ENCODE measurements at regions of chr10 and their contacts with region 1.

Region 1: GRCh38 chr10:72331601-72332422 is 22.9 kb downstream of the DNAJB12 start:
- DNase-seq: peak; percentile 82 to 99 (median 96)
- ATAC-seq: peak; percentile 74 to 77
- H3K4me3 Mint-ChIP-seq: peak overlapping the region; percentile 72 to 90 (median 84)
- H3K27ac Mint-ChIP-seq: peak overlapping the region; percentile 92 to 99 (median 98)
- H3K4me1 Mint-ChIP-seq: peaks cover 39 to 97% (median 93%) of the 10 kb centered on the region in 4 donors
- H3K27me3 Mint-ChIP-seq: no peaks in the 10 kb centered on the region

Region 2: DNA sequence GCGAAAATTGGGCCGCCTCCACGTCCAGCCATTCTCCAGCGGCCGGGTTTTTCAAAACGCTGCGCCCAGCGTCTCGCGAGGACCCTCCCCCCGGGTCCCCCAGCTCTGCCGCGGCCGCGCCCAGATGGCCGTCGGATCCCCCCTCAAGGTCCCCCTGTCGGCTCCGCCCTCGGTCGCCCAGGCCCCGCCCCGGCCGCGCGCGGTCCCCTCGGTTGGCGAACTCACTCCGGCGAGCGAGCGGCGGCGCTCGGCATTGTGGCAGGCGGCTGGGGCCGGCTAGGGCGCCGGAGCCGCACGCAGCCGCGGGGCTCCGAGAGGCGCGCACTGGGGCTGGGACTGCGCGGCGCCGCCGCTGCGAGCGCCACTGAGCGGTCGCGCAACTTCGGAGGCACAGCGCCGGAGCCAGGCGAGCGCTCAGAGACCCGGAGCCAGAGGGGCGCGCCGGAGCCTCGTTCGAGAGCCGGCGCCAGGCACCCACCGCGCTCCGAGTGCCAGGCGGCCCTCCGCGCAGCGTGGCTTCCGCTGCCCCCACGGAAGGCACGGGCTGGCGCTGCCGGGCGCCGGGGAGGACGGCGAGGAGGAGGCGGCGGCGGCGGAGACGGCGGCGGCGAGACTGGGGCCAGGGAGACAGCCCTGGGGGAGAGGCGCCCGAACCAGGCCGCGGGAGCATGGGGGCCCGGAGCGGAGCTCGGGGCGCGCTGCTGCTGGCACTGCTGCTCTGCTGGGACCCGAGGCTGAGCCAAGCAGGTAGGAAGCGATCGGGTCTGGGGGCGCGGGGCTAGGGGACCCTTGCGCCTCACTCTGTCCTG is 1119.3 kb before region 1 on chr10 and contains the start of gene UNC5B:
- POLR2A ChIA-PET with region 1: no interaction called
- DNase-seq: peak; percentile 25 to 77 (median 41)
- ATAC-seq: peak; percentile 74 to 87
- H3K4me3 Mint-ChIP-seq: peak within 1 kb of the TSS; percentile 65 to 84 (median 76)
- H3K27ac Mint-ChIP-seq: peak within 1 kb of the TSS in 2 of 10 donors; percentile 18 to 35
- H3K4me1 Mint-ChIP-seq: peaks cover 3 to 25% (median 22%) of the 10 kb centered on the region in 4 donors
- H3K27me3 Mint-ChIP-seq: peaks cover 34 to 67% (median 57%) of the 10 kb centered on the region in 5 donors
- polyA plus RNA-seq, gene UNC5B: 0.03 TPM in 1 of 3 donors, not detected in the others

Region 3: GRCh38 chr10:72223743-72224101 is 108.1 kb before region 1 on chr10:
- POLR2A ChIA-PET with region 1: interaction called, 10 read pairs
- DNase-seq: no peak
- ATAC-seq: no peak
- H3K4me3 Mint-ChIP-seq: peak overlapping the region in 8 of 10 donors; percentile 24 to 69 (median 55)
- H3K27ac Mint-ChIP-seq: peak overlapping the region; percentile 48 to 91 (median 81)
- H3K4me1 Mint-ChIP-seq: peaks cover 20 to 66% (median 60%) of the 10 kb centered on the region in 4 donors
- H3K27me3 Mint-ChIP-seq: no peaks in the 10 kb centered on the region

Region 4: DNA sequence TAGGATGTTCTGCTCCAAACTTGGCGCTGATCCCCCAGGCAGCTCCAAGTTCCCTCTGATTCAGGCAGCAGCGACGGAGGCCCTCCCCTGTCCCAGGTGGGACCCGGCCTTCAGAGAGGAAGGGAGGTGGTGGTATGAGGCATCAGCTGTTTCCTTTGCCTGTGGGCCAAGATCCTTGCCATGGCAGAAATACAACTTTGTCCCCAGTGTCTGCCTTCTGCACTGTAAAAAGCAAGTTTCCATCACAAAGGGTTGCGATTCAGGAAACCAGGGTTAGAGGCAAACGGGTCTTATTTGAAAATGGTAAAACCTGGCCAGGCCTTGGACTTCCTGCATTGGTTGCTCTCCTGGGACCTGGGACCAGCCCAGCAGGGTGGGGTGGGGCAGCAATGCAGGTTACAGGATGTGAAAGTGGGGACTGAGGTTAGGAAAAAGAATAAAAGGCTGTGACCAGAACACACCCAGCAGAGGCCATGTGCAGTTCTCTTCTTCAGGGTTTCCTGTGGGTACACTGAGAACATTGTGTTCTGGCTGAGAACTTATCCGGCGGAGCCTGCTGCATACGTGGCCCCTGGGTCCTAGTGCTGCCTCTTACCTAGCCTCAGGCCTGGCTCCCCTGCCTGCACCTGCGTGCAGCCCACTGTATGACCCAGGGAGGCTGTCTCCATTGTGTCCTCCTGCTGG is 83.2 kb before region 1 on chr10:
- POLR2A ChIA-PET with region 1: interaction called, 16 read pairs
- DNase-seq: peak; percentile 46 to 92 (median 81)
- ATAC-seq: peak; percentile 82 to 86
- H3K4me3 Mint-ChIP-seq: peak overlapping the region; percentile 70 to 91 (median 86)
- H3K27ac Mint-ChIP-seq: peak overlapping the region; percentile 93 to 99 (median 98)
- H3K4me1 Mint-ChIP-seq: peaks cover 49 to 95% (median 90%) of the 10 kb centered on the region in 4 donors
- H3K27me3 Mint-ChIP-seq: no peaks in the 10 kb centered on the region

Region 5: GRCh38 chr10:72254813-72255568 is 76.8 kb before region 1 on chr10:
- POLR2A ChIA-PET with region 1: interaction called, 17 read pairs
- DNase-seq: peak in 6 of 10 donors; percentile 28 to 67 (median 41)
- ATAC-seq: peak; percentile 71 to 85
- H3K4me3 Mint-ChIP-seq: peak overlapping the region; percentile 66 to 92 (median 78)
- H3K27ac Mint-ChIP-seq: peak overlapping the region; percentile 93 to 98 (median 96)
- H3K4me1 Mint-ChIP-seq: peaks cover 47 to 89% (median 84%) of the 10 kb centered on the region in 4 donors
- H3K27me3 Mint-ChIP-seq: no peaks in the 10 kb centered on the region

Region 6: GRCh38 chr10:72260588-72261322 is 71.1 kb before region 1 on chr10:
- POLR2A ChIA-PET with region 1: interaction called, 17 read pairs
- DNase-seq: peak; percentile 62 to 86 (median 72)
- ATAC-seq: peak; percentile 72 to 75
- H3K4me3 Mint-ChIP-seq: peak overlapping the region; percentile 82 to 94 (median 89)
- H3K27ac Mint-ChIP-seq: peak overlapping the region; percentile 87 to 99 (median 94)
- H3K4me1 Mint-ChIP-seq: peaks cover 37 to 76% (median 75%) of the 10 kb centered on the region in 4 donors
- H3K27me3 Mint-ChIP-seq: no peaks in the 10 kb centered on the region

Region 7: GRCh38 chr10:72297968-72298773 is 33.6 kb before region 1 on chr10:
- POLR2A ChIA-PET with region 1: interaction called, 16 read pairs
- DNase-seq: peak; percentile 51 to 90 (median 78)
- ATAC-seq: peak; percentile 51
- H3K4me3 Mint-ChIP-seq: peak overlapping the region; percentile 39 to 89 (median 82)
- H3K27ac Mint-ChIP-seq: peak overlapping the region; percentile 43 to 100 (median 97)
- H3K4me1 Mint-ChIP-seq: peaks cover 25 to 63% (median 58%) of the 10 kb centered on the region in 4 donors
- H3K27me3 Mint-ChIP-seq: peaks cover 0 to 2% (median 0%) of the 10 kb centered on the region in 5 donors

Region 8: GRCh38 chr10:72319416-72320254 is 12.2 kb before region 1 on chr10:
- POLR2A ChIA-PET with region 1: interaction called, 124 read pairs
- DNase-seq: peak; percentile 78 to 93 (median 88)
- ATAC-seq: peak; percentile 71 to 82
- H3K4me3 Mint-ChIP-seq: peak overlapping the region; percentile 67 to 85 (median 82)
- H3K27ac Mint-ChIP-seq: peak overlapping the region; percentile 90 to 99 (median 98)
- H3K4me1 Mint-ChIP-seq: peaks cover 46 to 90% (median 88%) of the 10 kb centered on the region in 4 donors
- H3K27me3 Mint-ChIP-seq: no peaks in the 10 kb centered on the region

Region 9: DNA sequence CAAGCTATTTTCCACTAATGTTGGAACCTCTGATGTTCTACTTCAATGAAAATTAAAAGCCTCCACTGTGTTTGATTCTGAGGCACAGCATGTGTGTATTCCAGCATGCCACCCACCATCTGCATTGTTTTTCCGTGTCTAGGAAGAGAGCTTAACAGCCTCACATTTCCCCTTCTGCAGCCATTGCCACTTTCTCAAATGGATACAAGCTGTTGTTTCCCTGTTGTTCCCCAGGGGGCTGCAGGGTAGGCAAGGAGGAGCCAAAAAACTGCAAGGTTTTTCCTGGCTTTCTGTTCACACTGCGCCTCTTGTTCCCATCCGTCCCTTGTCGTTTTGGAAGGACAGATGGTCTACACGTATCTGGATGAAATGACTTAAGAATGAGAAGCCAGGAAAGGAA is 95.2 kb after region 1 on chr10:
- POLR2A ChIA-PET with region 1: no interaction called
- DNase-seq: no peak
- ATAC-seq: no peak
- H3K4me3 Mint-ChIP-seq: no peak overlapping the region
- H3K27ac Mint-ChIP-seq: no peak overlapping the region
- H3K4me1 Mint-ChIP-seq: no peaks in the 10 kb centered on the region
- H3K27me3 Mint-ChIP-seq: no peaks in the 10 kb centered on the region